ENCODE measurements at regions of chr1 and their contacts with region 1.

Region 1: GRCh38 chr1:224434691-224435317 is at the start of gene WDR26:
- DNase-seq: peak; percentile 85
- ATAC-seq: peak; percentile 84 to 86
- H3K4me3 ChIP-seq: peak within 1 kb of the TSS; percentile 87 to 98 (median 96)
- H3K27ac ChIP-seq: peak within 1 kb of the TSS; percentile 95 to 100 (median 99)
- H3K4me1 ChIP-seq: peaks cover 32 to 42% of the 10 kb centered on the region in 2 donors
- H3K27me3 ChIP-seq: no peaks in the 10 kb centered on the region
- CTCF ChIP-seq: peak in 3 of 5 experiments; percentile 5 to 19 (median 10)
- POLR2A ChIP-seq: peak; percentile 87 to 90
- total RNA-seq, gene WDR26: 62.1 to 86.5 (median 74.0) TPM

Region 2: GRCh38 chr1:223831755-223832636 is 602.8 kb before region 1 on chr1:
- in situ Hi-C with region 1: no loop called
- intact Hi-C with region 1: no loop called
- DNase-seq: no peak
- ATAC-seq: peak in 1 of 2 donors; percentile 16
- H3K4me3 ChIP-seq: peak overlapping the region in 1 of 4 donors; percentile 12
- H3K27ac ChIP-seq: peak overlapping the region; percentile 59 to 76 (median 73)
- H3K4me1 ChIP-seq: peaks cover 58 to 62% of the 10 kb centered on the region in 2 donors
- H3K27me3 ChIP-seq: no peaks in the 10 kb centered on the region
- CTCF ChIP-seq: peak in 1 of 5 experiments; percentile 9
- POLR2A ChIP-seq: no peak

Region 3: DNA sequence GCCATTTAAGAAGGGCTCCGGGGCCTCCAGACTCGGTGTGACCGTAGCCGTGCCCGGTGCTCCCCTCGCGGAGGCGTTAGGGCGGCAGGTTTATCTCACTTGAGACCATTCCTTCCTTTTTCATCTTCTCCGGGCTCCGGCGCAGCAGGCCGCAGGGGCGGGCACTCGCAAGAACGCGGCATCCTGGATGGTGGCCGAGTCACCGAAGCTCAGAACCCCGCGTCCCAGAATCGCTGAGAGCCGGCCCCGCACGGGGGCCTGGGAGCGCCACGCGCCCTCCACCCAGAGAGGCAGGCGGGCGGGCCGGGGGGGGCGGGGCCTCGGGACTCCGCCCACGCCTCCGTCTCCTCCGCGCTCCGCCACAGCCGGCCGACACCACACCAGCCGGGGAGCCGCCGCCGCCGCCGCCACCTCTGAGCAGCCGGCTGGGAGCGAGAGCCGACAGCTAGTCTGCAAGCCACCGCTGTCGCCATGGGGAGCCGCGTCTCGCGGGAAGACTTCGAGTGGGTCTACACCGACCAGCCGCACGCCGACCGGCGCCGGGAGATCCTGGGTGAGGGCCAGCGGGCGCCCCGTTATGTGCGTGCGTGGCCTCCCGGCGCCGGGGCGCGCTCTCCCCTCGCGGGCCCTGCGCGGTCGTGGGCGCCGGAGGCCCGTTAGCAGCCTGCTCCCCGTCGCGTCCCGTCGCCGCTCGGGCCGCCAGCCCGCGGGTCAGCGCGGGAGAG is 251.8 kb before region 1 on chr1 and contains the start of gene DEGS1:
- in situ Hi-C with region 1: no loop called
- intact Hi-C with region 1: loop called (anchors 2 kb)
- DNase-seq: peak; percentile 63 to 82
- ATAC-seq: peak; percentile 92 to 94
- H3K4me3 ChIP-seq: peak within 1 kb of the TSS; percentile 69 to 98 (median 88)
- H3K27ac ChIP-seq: peak within 1 kb of the TSS; percentile 82 to 99 (median 96)
- H3K4me1 ChIP-seq: peaks cover 10 to 19% of the 10 kb centered on the region in 2 donors
- H3K27me3 ChIP-seq: no peaks in the 10 kb centered on the region
- CTCF ChIP-seq: no peak
- POLR2A ChIP-seq: peak; percentile 79 to 92
- total RNA-seq, gene DEGS1: 21.5 to 26.3 (median 24.2) TPM

Region 4: DNA sequence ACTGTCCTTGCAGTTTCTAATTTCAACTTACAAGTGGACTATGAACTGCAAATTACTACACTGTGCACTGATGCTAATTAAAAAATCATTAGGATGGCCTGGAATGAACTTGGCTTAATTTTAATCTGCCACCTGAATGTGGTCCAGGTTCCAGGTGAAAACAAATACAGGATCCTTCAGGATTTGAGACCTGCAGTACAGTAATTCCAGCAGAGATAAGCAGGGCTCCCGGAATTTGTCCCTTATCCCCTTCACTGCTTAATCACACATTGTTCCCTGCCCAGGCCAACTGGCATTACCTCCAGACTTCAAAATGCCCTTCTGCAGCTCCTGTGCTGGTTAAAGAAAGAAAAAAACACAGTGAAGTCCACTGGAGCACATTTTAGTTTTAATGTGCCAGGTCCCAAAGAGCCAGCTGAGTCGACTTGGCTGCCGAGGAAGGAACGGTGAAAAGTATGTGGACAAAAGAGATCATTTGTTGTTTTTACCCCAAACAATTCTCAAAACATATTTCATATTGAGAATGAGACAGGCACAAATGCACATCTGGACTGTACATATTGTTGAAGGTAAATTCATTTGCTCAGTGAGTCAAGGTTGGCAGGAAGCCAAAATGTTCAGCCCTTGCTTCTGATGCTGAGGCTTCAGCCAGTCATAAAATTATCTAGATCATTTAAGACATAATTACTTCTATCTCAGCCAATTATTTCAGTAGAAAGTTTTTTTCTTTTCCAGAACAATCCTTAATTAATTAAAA is 223.4 kb before region 1 on chr1:
- in situ Hi-C with region 1: no loop called
- intact Hi-C with region 1: loop called (anchors 10 kb)
- DNase-seq: no peak
- ATAC-seq: no peak
- H3K4me3 ChIP-seq: no peak overlapping the region
- H3K27ac ChIP-seq: peak overlapping the region in 2 of 4 donors; percentile 16 to 56
- H3K4me1 ChIP-seq: peaks cover 6 to 12% of the 10 kb centered on the region in 2 donors
- H3K27me3 ChIP-seq: no peaks in the 10 kb centered on the region
- CTCF ChIP-seq: no peak
- POLR2A ChIP-seq: no peak

Region 5: GRCh38 chr1:224356685-224357625 is 77.8 kb before region 1 on chr1 and contains the start of gene CNIH4:
- in situ Hi-C with region 1: no loop called
- intact Hi-C with region 1: loop called (anchors 2 kb)
- DNase-seq: peak; percentile 90 to 93
- ATAC-seq: peak; percentile 98
- H3K4me3 ChIP-seq: peak within 1 kb of the TSS; percentile 72 to 89 (median 88)
- H3K27ac ChIP-seq: peak within 1 kb of the TSS; percentile 85 to 95 (median 89)
- H3K4me1 ChIP-seq: peaks cover 23 to 33% of the 10 kb centered on the region in 2 donors
- H3K27me3 ChIP-seq: no peaks in the 10 kb centered on the region
- CTCF ChIP-seq: no peak
- POLR2A ChIP-seq: peak; percentile 93 to 94
- total RNA-seq, gene CNIH4: 24.5 to 58.5 (median 39.1) TPM

Region 6: GRCh38 chr1:224380003-224380402 is 54.8 kb before region 1 on chr1:
- in situ Hi-C with region 1: no loop called
- intact Hi-C with region 1: loop called (anchors 5 kb)
- DNase-seq: no peak
- ATAC-seq: no peak
- H3K4me3 ChIP-seq: no peak overlapping the region
- H3K27ac ChIP-seq: peak overlapping the region in 2 of 4 donors; percentile 44 to 69
- H3K4me1 ChIP-seq: peaks cover 19 to 28% of the 10 kb centered on the region in 2 donors
- H3K27me3 ChIP-seq: no peaks in the 10 kb centered on the region
- CTCF ChIP-seq: no peak
- POLR2A ChIP-seq: no peak

Region 7: GRCh38 chr1:224454397-224455066 is 19.7 kb after region 1 on chr1:
- in situ Hi-C with region 1: no loop called
- intact Hi-C with region 1: loop called (anchors 1 kb)
- DNase-seq: peak in 1 of 2 donors; percentile 22
- ATAC-seq: no peak
- H3K4me3 ChIP-seq: no peak overlapping the region
- H3K27ac ChIP-seq: peak overlapping the region in 2 of 4 donors; percentile 37 to 41
- H3K4me1 ChIP-seq: peaks cover 16 to 50% of the 10 kb centered on the region in 2 donors
- H3K27me3 ChIP-seq: no peaks in the 10 kb centered on the region
- CTCF ChIP-seq: no peak
- POLR2A ChIP-seq: no peak

Region 8: GRCh38 chr1:224503161-224504118 is 68.6 kb after region 1 on chr1:
- in situ Hi-C with region 1: no loop called
- intact Hi-C with region 1: loop called (anchors 5 kb)
- DNase-seq: peak; percentile 90 to 96
- ATAC-seq: peak; percentile 94
- H3K4me3 ChIP-seq: peak overlapping the region in 3 of 4 donors; percentile 8 to 18 (median 15)
- H3K27ac ChIP-seq: peak overlapping the region; percentile 79 to 86 (median 82)
- H3K4me1 ChIP-seq: peaks cover 47 to 55% of the 10 kb centered on the region in 2 donors
- H3K27me3 ChIP-seq: no peaks in the 10 kb centered on the region
- CTCF ChIP-seq: peak in 4 of 5 experiments; percentile 6 to 51 (median 28)
- POLR2A ChIP-seq: peak in 1 of 2 donors; percentile 39

Region 9: DNA sequence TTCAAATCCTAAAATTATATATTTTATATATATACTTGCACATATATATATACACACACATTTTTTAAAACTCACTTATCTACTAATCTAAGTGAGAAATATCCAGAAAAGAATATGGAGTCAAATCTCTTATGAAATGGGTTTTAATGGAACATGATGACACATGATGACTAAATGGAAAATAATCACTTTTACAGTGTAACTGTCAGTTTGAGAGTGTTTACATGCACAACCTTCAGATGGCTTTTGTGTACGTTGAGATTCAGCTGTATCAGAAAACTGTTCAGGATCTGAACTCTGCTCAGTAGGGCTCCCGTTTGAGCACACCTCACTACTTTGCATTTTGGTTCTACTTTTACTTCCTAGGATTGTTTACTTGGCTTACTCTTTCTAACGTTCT is 684.5 kb after region 1 on chr1:
- in situ Hi-C with region 1: no loop called
- intact Hi-C with region 1: no loop called
- DNase-seq: no peak
- ATAC-seq: no peak
- H3K4me3 ChIP-seq: no peak overlapping the region
- H3K27ac ChIP-seq: no peak overlapping the region
- H3K4me1 ChIP-seq: no peaks in the 10 kb centered on the region
- H3K27me3 ChIP-seq: no peaks in the 10 kb centered on the region
- CTCF ChIP-seq: no peak
- POLR2A ChIP-seq: no peak

Measured in gastrocnemius medialis (tissue), 4 donors.